HEK293 (cell line): ENCODE measurements at regions of chr6 and their contacts with region 1.

Region 1: DNA sequence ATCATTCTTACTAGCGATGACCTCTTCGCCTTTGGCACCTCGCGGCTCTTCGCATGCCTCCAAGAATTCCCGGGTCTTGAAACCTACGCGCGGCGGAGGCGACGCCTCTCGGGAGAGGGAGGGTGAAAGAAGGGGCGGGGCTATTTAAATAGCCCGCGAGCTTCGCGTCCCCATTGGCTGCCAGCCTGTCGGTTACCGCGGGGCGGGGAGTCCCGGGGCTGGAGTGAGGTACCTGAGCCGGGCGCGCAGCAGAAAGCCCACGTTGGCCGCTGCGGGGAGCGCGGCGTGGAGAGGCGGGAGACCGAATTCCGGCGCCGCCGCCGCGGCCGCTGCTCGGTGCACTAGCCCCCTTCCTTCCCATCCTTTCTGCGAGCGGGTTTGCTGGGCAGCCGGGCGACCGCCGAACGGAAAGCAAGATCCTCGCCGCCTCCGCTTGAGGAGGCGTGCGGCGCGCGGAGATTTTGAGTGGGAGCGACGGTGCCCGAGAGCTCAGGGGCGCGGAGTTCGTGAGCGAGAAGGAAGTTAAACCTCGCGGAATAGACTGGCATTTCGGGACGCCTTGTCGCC is at the start of gene BMP6:
- H3K4me3 ChIP-seq: peak within 1 kb of the TSS; percentile 48
- H3K27ac ChIP-seq: peak within 1 kb of the TSS; percentile 33; the same call in 1 of the 2 replicates
- H3K4me1 ChIP-seq: peaks cover 15% of the 10 kb centered on the region
- CTCF ChIP-seq: no peak

Region 2: DNA sequence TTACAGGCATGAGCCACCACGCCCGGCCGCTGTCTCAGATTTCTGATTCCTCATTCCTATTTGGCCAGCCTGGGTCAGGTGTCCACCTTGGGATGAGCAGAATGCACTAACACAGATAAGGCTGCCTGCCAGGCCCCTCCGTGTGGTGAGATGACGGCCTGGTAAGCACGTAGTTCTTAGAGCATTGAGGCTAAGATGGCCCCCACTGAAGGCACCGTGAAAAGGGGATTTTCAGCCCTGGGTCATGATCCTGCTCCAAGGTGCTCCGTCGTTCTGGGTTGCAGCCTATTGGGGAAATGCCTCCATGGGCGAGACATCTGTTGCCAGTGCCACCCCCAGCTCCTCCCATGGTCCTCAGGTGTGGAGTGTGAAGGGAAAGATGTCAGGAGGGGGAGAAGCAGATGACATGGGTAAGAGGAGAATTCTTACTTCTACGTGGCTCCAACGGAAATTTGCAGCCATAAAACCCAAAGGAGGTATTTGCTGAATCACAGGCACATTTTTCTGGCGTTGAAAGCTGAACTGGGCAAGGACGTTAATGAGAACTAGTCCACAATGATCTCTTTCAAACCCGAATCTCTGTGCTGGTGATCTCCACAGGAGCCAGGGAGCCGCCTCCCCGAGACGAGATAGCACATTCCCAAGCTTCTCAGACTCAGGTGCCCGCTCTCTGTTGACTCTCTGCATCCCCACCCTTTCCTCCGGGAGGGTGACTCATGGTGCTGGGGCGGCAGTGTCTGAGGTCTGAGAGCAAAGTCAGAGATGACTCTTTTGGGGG is 34.1 kb before region 1 on chr6:
- CTCF ChIA-PET with region 1: interaction called, 9 read pairs
- POLR2A ChIA-PET with region 1: interaction called, 10 read pairs
- H3K4me3 ChIP-seq: peak overlapping the region; percentile 13; the same call in 1 of the 2 replicates
- H3K27ac ChIP-seq: no peak overlapping the region; the same call in 1 of the 2 replicates
- H3K4me1 ChIP-seq: no peaks in the 10 kb centered on the region; the same call in 1 of the 2 replicates
- CTCF ChIP-seq: no peak

Region 3: DNA sequence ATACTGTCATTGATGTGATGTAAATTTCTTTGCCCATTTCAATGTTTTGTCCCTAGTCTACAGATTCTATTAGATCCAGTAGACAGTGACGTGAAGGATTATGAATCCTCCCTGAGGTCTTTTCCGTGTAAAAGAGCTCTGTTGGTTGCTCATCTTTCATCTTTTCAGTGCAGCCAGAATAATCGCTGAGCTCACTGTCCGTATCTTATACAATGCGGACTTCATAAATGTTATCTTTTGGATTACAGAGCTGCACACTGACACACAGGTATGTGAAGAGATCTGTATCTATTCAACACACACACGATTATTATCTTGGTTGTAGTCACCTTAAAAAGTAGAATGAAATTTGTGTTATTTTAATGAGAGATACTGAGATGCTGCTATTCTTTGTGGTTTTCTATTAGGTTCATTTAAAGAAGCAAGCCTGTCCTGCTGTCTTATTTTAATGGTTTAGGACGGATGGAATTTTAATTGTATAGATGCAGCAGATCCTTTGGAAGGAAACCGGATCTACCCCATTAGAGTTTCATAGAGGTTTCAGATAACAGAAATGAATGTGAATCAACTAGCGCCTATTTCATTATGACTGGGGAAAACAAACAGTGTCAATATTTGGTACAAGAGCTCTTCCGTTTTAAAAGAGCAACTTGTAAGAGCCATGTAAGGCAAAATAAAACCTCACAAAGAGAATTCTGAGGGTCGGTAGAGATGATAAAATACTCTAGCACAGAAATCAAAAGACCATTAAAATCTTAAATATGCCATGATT is 79.3 kb after region 1 on chr6:
- CTCF ChIA-PET with region 1: interaction called, 6 read pairs
- POLR2A ChIA-PET with region 1: interaction called, 13 read pairs
- H3K4me3 ChIP-seq: peak overlapping the region; percentile 11
- H3K27ac ChIP-seq: no peak overlapping the region
- H3K4me1 ChIP-seq: peaks cover 12% of the 10 kb centered on the region
- CTCF ChIP-seq: no peak

Region 4: GRCh38 chr6:7910654-7911344 is 184.9 kb after region 1 on chr6 and contains the start of gene TXNDC5:
- CTCF ChIA-PET with region 1: interaction called, 3 read pairs
- POLR2A ChIA-PET with region 1: interaction called, 21 read pairs
- H3K4me3 ChIP-seq: peak within 1 kb of the TSS; percentile 71
- H3K27ac ChIP-seq: peak within 1 kb of the TSS; percentile 82
- H3K4me1 ChIP-seq: peaks cover 8% of the 10 kb centered on the region; the same call in 1 of the 2 replicates
- CTCF ChIP-seq: no peak

Region 5: DNA sequence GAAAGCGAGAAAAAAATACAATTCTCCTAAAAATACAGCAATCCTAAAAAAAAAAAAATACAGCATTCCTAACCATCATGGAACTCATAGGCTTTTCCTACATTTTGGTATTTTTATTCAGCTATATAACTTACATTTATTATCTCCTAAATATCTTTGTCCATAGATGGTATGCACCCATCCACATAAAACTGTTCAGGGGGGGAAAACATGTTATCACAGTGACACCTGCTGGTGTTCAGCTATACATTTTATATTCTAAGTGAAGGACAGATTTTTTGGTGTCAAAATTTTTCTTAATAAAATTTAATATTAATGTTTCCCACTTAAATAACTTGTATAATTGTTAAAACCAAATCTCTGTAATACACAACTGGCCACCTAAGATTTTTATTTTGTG is 280.3 kb after region 1 on chr6:
- CTCF ChIA-PET with region 1: interaction called, 75 read pairs
- POLR2A ChIA-PET with region 1: interaction called, 4 read pairs
- H3K4me3 ChIP-seq: no peak overlapping the region
- H3K27ac ChIP-seq: no peak overlapping the region
- H3K4me1 ChIP-seq: no peaks in the 10 kb centered on the region
- CTCF ChIP-seq: peak; percentile 34; the same call in 1 of the 2 replicates